ENCODE measurements at regions of chr19 and their contacts with region 1.

Region 1: DNA sequence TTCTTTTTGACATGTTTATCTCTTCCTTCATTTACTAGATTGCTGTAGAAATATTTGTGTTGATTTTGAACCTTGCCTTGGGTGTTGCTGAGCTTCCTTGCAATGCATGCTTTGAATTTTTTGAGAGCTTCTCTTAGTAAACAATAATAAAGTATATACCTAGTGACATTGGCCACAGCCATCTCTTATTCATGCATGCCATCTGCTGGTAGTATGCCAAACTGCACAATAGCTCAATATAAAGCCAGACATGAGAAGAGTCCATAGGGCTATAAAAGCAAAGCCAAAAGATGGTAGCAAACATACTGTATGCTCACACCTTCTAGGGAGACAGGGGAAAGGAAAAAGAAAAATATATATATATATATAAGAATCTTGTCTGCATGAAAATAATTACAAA is 18.9 kb upstream of the ZSCAN5A start:
- DNase-seq: peak; percentile 61
- ATAC-seq: peak; percentile 61
- H3K4me3 Mint-ChIP-seq: no peak overlapping the region
- H3K27ac Mint-ChIP-seq: no peak overlapping the region
- H3K4me1 Mint-ChIP-seq: no peaks in the 10 kb centered on the region
- H3K27me3 Mint-ChIP-seq: peaks cover 10% of the 10 kb centered on the region

Region 2: DNA sequence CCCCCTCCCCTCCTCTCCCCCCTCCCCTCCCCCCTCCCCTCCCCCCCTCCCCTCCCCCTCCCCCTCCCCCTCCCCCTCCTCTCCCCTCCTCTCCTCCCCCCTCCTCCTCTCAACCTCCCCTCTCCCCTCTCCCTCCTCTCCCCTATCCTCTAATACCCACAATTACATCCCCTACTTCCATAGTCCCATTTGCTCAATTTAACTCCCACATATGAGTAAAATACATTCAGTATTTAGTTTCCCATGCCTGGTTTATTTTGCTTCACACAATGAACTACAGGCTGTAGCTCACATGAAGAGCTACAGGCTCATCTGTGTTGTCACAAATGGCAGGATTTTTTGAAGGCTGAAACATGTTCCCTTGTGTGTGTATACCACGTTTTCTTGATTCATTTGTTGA is 340.0 kb before region 1 on chr19:
- CTCF ChIA-PET with region 1: no interaction called
- DNase-seq: no peak
- ATAC-seq: no peak
- H3K4me3 Mint-ChIP-seq: no peak overlapping the region
- H3K27ac Mint-ChIP-seq: no peak overlapping the region
- H3K4me1 Mint-ChIP-seq: no peaks in the 10 kb centered on the region
- H3K27me3 Mint-ChIP-seq: no peaks in the 10 kb centered on the region

Region 3: GRCh38 chr19:56066152-56067023 is 267.1 kb before region 1 on chr19:
- CTCF ChIA-PET with region 1: interaction called, 28 read pairs
- DNase-seq: peak; percentile 70
- ATAC-seq: peak; percentile 81
- H3K4me3 Mint-ChIP-seq: peak overlapping the region; percentile 41
- H3K27ac Mint-ChIP-seq: no peak overlapping the region
- H3K4me1 Mint-ChIP-seq: peaks cover 16% of the 10 kb centered on the region
- H3K27me3 Mint-ChIP-seq: peaks cover 16% of the 10 kb centered on the region

Region 4: DNA sequence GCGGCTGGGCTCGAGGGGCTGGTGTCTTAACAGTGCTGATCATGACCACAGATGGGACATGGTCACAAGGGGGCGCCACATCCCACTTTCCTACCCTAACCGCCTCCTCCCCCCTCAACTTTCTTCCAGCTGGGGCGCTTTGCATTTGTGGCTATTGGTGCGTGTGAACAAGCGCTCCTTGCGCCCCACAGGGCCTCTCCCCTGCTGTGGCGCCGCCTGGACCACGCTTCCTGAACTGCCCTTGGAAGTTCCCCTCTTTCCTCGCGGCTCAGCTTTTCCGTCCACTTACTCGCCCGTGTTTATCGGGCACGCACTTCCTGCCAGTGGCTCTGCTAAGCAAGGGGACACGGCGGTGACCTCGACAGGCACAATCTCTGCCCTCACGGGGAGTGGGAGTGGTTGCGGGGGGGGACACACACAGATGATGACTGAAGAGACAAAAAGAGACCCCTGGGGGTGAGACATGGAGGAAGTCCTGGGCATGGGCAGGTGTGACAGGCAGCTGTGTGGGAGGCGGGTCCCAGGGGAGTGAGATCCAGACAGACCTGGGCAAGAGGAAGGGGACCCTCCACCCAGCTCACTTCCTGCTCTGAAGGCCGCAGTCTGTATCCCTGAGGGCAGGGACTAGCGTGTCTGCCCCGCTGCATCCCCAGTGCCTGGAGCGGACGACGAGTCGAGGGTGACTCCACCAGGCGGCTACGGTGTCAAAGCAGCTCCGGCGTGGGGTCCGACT is 252.7 kb before region 1 on chr19:
- CTCF ChIA-PET with region 1: interaction called, 34 read pairs
- DNase-seq: peak; percentile 77
- ATAC-seq: peak; percentile 70
- H3K4me3 Mint-ChIP-seq: peak overlapping the region; percentile 64
- H3K27ac Mint-ChIP-seq: peak overlapping the region; percentile 25
- H3K4me1 Mint-ChIP-seq: peaks cover 9% of the 10 kb centered on the region
- H3K27me3 Mint-ChIP-seq: peaks cover 8% of the 10 kb centered on the region

Region 5: DNA sequence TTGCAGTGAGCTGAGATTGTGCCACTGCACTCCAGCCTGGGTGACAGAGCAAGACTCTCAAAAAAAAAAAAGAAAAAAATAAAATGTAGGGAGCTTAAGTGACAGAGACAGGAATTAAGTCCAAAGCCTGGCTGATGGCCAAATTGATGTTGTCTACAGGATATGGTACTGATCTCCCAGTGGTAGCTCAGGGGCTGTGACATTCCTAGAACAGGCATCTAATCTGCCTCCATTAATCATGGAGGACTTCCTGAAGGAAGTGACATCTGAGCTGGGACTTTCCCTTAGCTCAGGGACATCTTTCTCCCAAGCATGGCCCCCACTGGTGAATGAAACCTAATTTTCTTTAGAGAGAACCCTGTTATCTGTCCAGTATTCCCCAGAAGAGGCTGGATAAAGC is 72.4 kb before region 1 on chr19:
- CTCF ChIA-PET with region 1: interaction called, 91 read pairs
- DNase-seq: no peak
- ATAC-seq: no peak
- H3K4me3 Mint-ChIP-seq: no peak overlapping the region
- H3K27ac Mint-ChIP-seq: no peak overlapping the region
- H3K4me1 Mint-ChIP-seq: no peaks in the 10 kb centered on the region
- H3K27me3 Mint-ChIP-seq: no peaks in the 10 kb centered on the region

Region 6: DNA sequence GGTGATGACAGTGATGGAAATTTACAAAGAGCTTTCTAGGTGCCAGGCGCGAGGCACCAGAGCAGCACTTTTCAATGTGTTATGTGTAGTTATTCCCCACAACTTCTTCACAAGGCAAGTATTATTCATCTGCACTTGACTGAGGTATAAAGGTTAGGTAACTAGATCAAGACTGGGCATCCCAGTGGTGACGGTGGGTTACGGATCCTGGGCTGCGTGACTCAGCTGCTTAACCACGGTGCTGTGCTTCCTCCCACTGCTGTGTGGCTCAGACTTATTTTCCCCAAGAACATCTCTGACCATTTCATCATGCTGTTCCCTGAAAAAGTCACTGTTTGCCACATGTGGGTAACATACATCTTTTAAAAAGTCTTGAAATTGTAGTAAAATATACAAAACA is 41.6 kb before region 1 on chr19:
- CTCF ChIA-PET with region 1: no interaction called
- DNase-seq: no peak
- ATAC-seq: no peak
- H3K4me3 Mint-ChIP-seq: no peak overlapping the region
- H3K27ac Mint-ChIP-seq: no peak overlapping the region
- H3K4me1 Mint-ChIP-seq: no peaks in the 10 kb centered on the region
- H3K27me3 Mint-ChIP-seq: no peaks in the 10 kb centered on the region

Region 7: GRCh38 chr19:56314562-56315077 is 18.9 kb before region 1 on chr19 and contains the start of gene ZSCAN5A:
- CTCF ChIA-PET with region 1: interaction called, 17 read pairs
- DNase-seq: peak; percentile 97
- ATAC-seq: peak; percentile 84
- H3K4me3 Mint-ChIP-seq: peak within 1 kb of the TSS; percentile 89
- H3K27ac Mint-ChIP-seq: peak within 1 kb of the TSS; percentile 99
- H3K4me1 Mint-ChIP-seq: peaks cover 28% of the 10 kb centered on the region
- H3K27me3 Mint-ChIP-seq: no peaks in the 10 kb centered on the region
- total RNA-seq, gene ZSCAN5A: 5.9 to 8.6 TPM